Psoas muscle (tissue), 8 donors: ENCODE measurements at regions of chrX and their contacts with region 1.

Region 1: DNA sequence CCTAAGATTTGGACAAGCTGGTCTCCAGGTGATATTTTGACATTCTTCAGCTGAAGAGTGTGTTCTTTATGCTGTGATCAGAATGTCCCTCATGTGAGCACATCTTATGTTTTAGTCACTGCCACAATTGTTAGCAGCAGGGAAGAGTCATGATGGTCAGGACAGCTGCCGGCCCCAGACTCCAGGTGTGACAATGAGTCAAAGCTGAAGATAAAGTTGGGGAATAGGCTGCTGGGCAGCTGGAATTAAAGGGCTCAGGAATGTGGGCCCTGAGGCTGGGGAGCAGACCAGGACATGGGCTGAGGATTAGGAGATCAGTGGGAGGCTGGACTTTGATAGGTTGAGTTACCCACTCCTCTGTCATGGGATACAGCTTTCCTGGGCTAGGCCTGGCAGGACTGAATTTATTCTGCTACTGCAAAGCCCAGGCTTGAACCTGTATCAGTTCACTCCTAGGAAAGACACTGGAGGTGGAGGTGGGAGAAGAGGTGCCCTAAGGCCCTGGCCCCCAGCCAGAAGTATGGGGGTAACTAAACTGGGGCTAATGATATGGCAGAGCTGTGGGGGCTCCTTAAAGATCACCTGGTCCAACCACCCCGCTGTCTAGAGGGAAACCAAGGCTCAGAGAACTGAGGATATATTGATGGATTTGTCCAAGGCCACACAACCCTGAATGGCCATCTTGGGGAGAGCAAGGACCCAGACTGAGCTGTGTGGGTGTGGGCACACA is 119.5 kb downstream of the PJA1 start:
- DNase-seq: no peak
- ATAC-seq: no peak
- H3K4me3 ChIP-seq: no peak overlapping the region
- H3K27ac ChIP-seq: no peak overlapping the region
- H3K4me1 ChIP-seq: no peaks in the 10 kb centered on the region
- H3K27me3 ChIP-seq: peaks cover 0 to 24% (median 0%) of the 10 kb centered on the region in 3 donors
- CTCF ChIP-seq: no peak

Region 2: DNA sequence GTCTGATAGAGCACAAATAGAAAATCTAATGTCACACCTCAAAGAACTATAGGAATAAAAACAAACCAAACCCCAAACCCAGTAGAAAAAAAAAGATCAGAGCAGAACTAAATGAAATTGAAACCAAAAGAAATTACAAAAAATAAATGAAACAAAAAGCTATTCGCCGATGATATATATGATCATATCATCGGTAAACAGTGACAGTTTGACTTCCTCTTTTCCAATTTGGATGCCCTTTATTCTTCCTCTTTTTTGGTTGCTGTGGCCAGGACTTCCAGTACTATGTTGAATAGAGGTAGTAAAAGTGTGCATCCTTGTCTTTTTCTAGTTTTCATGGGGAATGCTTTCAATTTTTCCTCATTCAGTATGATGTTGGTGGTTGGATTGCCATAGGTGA is 1717.3 kb before region 1 on chrX:
- intact Hi-C with region 1: no loop called
- DNase-seq: no peak
- ATAC-seq: no peak
- H3K4me3 ChIP-seq: no peak overlapping the region
- H3K27ac ChIP-seq: no peak overlapping the region
- H3K4me1 ChIP-seq: no peaks in the 10 kb centered on the region
- H3K27me3 ChIP-seq: peaks cover 0 to 8% (median 0%) of the 10 kb centered on the region in 3 donors
- CTCF ChIP-seq: no peak

Region 3: DNA sequence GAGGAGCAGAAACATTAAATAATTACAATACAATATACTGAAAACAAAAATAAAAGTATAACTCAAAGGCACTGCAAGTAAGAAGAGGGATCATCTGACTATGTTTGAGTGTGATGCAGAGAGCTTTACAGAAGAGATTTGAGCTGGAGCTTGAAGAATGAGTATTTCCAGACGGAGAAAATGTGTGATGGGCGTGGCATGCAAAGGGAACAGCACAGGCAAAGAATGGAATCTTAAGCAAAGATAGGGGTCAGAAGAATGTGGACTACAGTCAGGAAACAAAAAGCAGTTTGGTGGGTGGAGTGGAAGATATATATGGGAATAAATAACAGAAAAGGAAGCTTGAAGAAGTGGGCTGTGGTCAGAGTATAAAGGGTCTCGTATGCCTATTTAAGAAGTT is 658.0 kb before region 1 on chrX:
- intact Hi-C with region 1: loop called in 1 of 2 experiments (anchors 10 kb)
- DNase-seq: no peak
- ATAC-seq: no peak
- H3K4me3 ChIP-seq: no peak overlapping the region
- H3K27ac ChIP-seq: no peak overlapping the region
- H3K4me1 ChIP-seq: no peaks in the 10 kb centered on the region
- H3K27me3 ChIP-seq: peaks cover 0 to 10% (median 0%) of the 10 kb centered on the region in 3 donors
- CTCF ChIP-seq: no peak